ENCODE measurements at regions of chr14 and their contacts with region 1.

Region 1: GRCh38 chr14:102437997-102438915 is 71.3 kb downstream of the ANKRD9 start:
- DNase-seq: peak; percentile 68 to 90
- H3K4me3 ChIP-seq: no peak overlapping the region
- H3K27ac ChIP-seq: no peak overlapping the region
- H3K4me1 ChIP-seq: peaks cover 33% of the 10 kb centered on the region
- H3K27me3 ChIP-seq: no peaks in the 10 kb centered on the region
- CTCF ChIP-seq: peak; percentile 98

Region 2: GRCh38 chr14:101525640-101526527 is 912.4 kb before region 1 on chr14:
- CTCF ChIA-PET with region 1: interaction called, 10 read pairs
- POLR2A ChIA-PET with region 1: no interaction called
- intact Hi-C with region 1: no loop called
- DNase-seq: no peak
- H3K4me3 ChIP-seq: no peak overlapping the region
- H3K27ac ChIP-seq: no peak overlapping the region
- H3K4me1 ChIP-seq: no peaks in the 10 kb centered on the region
- H3K27me3 ChIP-seq: no peaks in the 10 kb centered on the region
- CTCF ChIP-seq: no peak

Region 3: DNA sequence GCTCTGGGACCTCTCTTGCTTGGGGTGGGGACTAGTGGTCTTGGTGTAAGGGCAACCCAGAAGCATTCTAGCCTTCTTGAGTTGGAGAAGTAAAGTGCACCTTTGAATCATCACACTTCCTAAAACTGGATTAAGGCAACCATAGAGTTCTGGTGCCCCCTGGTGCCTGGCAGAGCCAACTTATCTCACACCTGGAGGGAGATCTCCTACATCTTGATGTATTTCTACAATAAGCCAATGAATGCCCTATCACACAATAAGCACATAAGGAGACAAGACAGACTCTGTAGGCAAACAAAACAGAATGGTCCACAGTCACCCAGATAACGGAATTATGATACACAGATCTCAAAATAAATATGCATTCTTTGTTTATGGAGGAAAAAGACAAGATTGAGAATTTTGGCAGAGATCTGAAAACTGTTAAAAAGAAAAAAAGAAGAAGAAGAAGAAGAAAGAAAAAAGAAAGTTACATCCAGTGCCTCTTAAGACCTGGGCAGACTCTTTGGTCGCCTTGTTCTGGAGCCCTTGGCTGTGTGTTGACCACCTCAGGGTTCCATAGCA is 772.7 kb before region 1 on chr14:
- CTCF ChIA-PET with region 1: no interaction called
- POLR2A ChIA-PET with region 1: no interaction called
- intact Hi-C with region 1: loop called (anchors 5 kb)
- DNase-seq: peak; percentile 71 to 81
- H3K4me3 ChIP-seq: no peak overlapping the region
- H3K27ac ChIP-seq: no peak overlapping the region
- H3K4me1 ChIP-seq: no peaks in the 10 kb centered on the region
- H3K27me3 ChIP-seq: no peaks in the 10 kb centered on the region
- CTCF ChIP-seq: peak; percentile 99

Region 4: DNA sequence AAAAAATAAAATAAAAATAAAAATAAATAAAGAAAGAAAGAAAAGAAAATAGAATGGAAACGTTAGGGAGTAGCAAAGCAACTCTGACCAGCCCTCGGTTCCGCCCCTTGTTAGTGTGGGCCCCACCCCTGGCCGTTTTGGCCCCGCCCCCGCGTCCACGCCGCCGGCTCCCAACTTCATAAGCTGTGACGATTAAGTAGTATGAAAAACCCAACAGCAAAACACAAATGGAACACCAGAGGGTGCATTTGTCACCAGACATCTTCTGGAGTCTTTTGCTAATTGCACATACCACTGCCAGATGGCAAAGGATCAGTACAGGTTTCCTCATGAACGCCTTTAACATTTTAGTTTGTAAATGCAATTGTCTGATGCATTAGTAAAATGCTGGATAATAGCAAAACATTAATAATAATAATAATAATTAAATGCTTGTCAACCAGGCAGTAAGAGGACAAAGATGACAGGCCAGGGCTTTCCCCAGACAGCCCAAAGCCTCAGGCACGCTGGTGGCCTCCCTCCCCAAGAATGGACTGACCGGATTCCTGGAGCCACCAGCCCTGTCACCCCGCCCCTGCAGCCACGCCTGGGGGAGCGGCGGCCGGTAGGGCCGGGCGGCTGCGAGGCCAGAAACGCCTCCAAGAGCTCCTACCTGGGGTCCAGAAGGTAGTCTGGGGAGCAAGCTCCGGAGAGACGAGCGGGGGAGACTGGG is 375.0 kb before region 1 on chr14:
- CTCF ChIA-PET with region 1: no interaction called
- POLR2A ChIA-PET with region 1: no interaction called
- intact Hi-C with region 1: no loop called
- DNase-seq: peak; percentile 95 to 97
- H3K4me3 ChIP-seq: peak overlapping the region; percentile 48
- H3K27ac ChIP-seq: peak overlapping the region; percentile 57
- H3K4me1 ChIP-seq: peaks cover 23% of the 10 kb centered on the region
- H3K27me3 ChIP-seq: no peaks in the 10 kb centered on the region
- CTCF ChIP-seq: peak; percentile 88

Region 5: GRCh38 chr14:102493096-102493495 is 54.8 kb after region 1 on chr14:
- CTCF ChIA-PET with region 1: no interaction called
- POLR2A ChIA-PET with region 1: no interaction called
- intact Hi-C with region 1: no loop called
- DNase-seq: no peak
- H3K4me3 ChIP-seq: no peak overlapping the region
- H3K27ac ChIP-seq: no peak overlapping the region
- H3K4me1 ChIP-seq: no peaks in the 10 kb centered on the region; the same call in 1 of the 2 replicates
- H3K27me3 ChIP-seq: no peaks in the 10 kb centered on the region
- CTCF ChIP-seq: no peak

Region 6: DNA sequence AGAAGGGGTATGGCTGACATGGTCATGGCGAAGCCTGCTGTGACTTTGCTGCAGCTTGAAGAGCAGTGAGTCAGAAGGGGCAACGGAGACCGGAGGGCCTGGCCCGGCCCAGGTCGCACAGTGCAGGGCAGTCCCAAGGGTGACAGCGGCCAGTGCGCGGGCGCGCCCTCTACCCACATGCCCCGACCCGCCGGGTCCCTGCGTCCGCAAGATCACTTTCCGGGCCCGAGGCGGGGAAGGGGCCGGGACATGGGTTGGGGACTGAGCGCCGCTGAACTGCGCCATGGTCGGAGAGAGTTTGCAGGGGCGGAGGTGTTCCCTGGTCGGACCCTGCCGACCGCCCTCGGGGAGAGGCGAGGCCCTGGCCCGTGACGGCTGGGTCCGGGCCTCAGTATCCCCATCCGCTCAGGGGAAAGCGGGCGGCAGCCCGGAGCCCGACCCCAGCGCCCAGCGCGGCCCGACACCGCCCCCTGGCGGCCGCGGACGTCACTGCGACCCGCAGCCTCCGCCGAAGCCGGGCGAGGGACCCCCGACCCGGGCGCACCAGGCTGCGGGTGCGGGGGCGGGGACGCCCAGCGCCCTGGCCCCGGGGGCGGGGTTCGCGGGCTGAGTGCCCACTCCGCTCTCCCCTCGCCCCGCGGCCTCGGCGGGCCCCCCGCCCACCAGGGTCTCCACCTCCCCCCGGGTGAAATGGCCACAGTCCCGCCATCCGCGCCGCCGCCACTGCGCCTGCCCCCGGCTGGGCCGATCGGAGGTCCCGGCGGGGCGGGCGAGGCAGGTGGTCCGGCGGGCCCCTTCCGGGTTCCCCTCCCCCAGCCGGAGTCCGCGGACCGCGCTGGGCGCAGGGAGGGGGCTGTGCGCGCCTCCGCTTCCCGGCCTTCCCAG is 78.5 kb after region 1 on chr14:
- CTCF ChIA-PET with region 1: interaction called, 4 read pairs
- POLR2A ChIA-PET with region 1: no interaction called
- intact Hi-C with region 1: loop called (anchors 1 kb)
- DNase-seq: peak; percentile 55 to 72
- H3K4me3 ChIP-seq: peak overlapping the region; percentile 73
- H3K27ac ChIP-seq: no peak overlapping the region
- H3K4me1 ChIP-seq: peaks cover 7% of the 10 kb centered on the region
- H3K27me3 ChIP-seq: no peaks in the 10 kb centered on the region
- CTCF ChIP-seq: peak; percentile 89

Region 7: GRCh38 chr14:102694530-102695166 is 256.4 kb after region 1 on chr14:
- CTCF ChIA-PET with region 1: interaction called, 4 read pairs
- POLR2A ChIA-PET with region 1: no interaction called
- intact Hi-C with region 1: loop called (anchors 10 kb)
- DNase-seq: peak; percentile 66 to 80
- H3K4me3 ChIP-seq: no peak overlapping the region
- H3K27ac ChIP-seq: no peak overlapping the region
- H3K4me1 ChIP-seq: peaks cover 26% of the 10 kb centered on the region
- H3K27me3 ChIP-seq: no peaks in the 10 kb centered on the region
- CTCF ChIP-seq: peak; percentile 99